ENCODE measurements at regions of chr20 and their contacts with region 1.

Region 1: GRCh38 chr20:50569864-50570836 is 60.0 kb downstream of the PTPN1 start:
- DNase-seq: peak in 3 of 9 experiments; percentile 23 to 78 (median 55)
- ATAC-seq: peak; percentile 75
- H3K4me3 ChIP-seq: no peak overlapping the region
- H3K4me3 Mint-ChIP-seq: peak overlapping the region; percentile 9
- H3K27ac ChIP-seq: peak overlapping the region in 1 of 2 experiments; percentile 4
- H3K27ac Mint-ChIP-seq: peak overlapping the region; percentile 76
- H3K4me1 ChIP-seq: peaks cover 26% of the 10 kb centered on the region
- H3K4me1 Mint-ChIP-seq: peaks cover 65% of the 10 kb centered on the region
- H3K27me3 ChIP-seq: no peaks in the 10 kb centered on the region
- H3K27me3 Mint-ChIP-seq: no peaks in the 10 kb centered on the region
- CTCF ChIP-seq: no peak

Region 2: GRCh38 chr20:50379049-50379990 is 190.8 kb before region 1 on chr20:
- CTCF ChIA-PET with region 1: no interaction called
- POLR2A ChIA-PET with region 1: no interaction called
- intact Hi-C with region 1: no loop called
- DNase-seq: no peak
- ATAC-seq: no peak
- H3K4me3 ChIP-seq: no peak overlapping the region
- H3K4me3 Mint-ChIP-seq: no peak overlapping the region
- H3K27ac ChIP-seq: no peak overlapping the region
- H3K27ac Mint-ChIP-seq: no peak overlapping the region
- H3K4me1 ChIP-seq: peaks cover 11% of the 10 kb centered on the region
- H3K4me1 Mint-ChIP-seq: peaks cover 35% of the 10 kb centered on the region
- H3K27me3 ChIP-seq: no peaks in the 10 kb centered on the region
- H3K27me3 Mint-ChIP-seq: peaks cover under 1% of the 10 kb centered on the region
- CTCF ChIP-seq: no peak

Region 3: DNA sequence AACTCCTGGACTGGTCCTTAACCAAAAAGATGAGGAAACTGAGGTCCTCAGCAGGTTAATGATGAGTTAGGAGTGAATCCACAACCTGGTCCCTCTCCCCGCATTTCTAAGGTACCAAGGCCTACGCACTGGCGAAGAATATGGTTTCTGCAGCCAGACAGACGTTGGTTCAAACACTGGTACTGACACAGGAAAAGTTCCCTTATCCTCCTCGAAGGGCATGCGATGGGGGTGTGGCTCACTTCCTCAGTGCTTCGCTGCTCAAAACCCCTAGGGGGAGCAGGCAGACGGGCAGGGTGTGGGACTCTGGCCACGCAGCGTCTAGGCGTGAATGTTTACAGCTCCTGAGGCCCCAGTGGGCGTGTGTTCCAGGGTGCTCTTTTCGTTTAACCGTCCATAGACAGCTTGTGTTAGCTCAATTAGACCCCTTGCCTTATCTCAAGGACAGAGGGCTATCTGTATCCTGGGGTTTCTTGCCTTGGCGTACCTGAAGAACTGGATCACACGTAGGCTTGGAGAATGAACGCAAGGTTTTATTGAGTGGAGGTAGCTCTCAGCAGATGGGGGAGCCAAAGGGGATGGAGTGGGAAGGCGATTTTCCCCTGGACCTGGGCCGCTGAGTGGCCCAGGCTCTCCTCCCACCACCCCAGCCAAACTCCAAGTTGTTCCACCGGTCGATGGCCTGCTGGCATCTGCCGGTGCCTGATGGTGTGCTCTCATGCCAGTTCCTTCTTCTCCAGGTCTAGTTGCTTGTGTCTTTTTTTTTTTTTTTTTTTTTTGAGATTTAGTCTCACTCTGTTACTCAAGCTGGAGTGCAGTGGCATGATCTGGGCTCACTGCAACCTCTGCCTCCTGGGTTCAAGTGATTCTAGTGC is 91.8 kb before region 1 on chr20:
- CTCF ChIA-PET with region 1: interaction called, 32 read pairs
- POLR2A ChIA-PET with region 1: interaction called, 4 read pairs
- intact Hi-C with region 1: loop called in 1 of 2 experiments (anchors 1 kb)
- DNase-seq: peak; percentile 51 to 85 (median 75)
- ATAC-seq: peak; percentile 100
- H3K4me3 ChIP-seq: no peak overlapping the region
- H3K4me3 Mint-ChIP-seq: no peak overlapping the region
- H3K27ac ChIP-seq: no peak overlapping the region
- H3K27ac Mint-ChIP-seq: no peak overlapping the region
- H3K4me1 ChIP-seq: peaks cover 13% of the 10 kb centered on the region
- H3K4me1 Mint-ChIP-seq: peaks cover 16% of the 10 kb centered on the region
- H3K27me3 ChIP-seq: no peaks in the 10 kb centered on the region
- H3K27me3 Mint-ChIP-seq: no peaks in the 10 kb centered on the region
- CTCF ChIP-seq: peak; percentile 69